Activated CD4-positive, alpha-beta memory T cell treated with anti-CD3 and anti-CD28 coated beads for 36 hours (primary cell): ENCODE measurements at regions of chr21 and their contacts with region 1.

Region 1: DNA sequence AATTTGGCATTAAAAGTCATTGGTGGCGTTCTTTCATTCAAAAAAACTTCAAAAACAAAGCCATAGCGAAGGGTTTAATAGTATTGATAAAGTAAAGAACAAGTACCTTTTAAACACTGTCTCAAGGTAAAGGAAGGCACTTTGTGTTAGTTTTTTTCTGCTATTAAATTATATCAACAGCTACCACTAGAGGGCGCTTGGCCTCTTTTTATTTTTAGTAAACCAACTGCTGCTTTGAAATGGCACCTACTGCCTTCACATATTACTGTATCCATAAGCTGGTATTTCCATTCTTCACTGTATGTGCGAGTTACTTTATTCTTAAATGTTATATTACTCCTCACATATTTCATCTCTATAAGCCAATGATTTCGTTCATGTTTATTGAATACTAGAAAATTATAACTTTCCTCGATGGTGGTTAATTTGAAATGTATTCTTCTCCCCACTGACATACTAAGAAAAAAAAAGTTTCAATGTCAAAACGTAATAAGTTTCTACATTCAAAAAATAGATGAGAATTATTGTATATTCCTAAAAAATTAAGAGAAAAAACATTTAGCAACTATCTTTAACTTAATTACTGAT is 125.7 kb upstream of the CXADR start:
- DNase-seq: peak; percentile 29
- H3K4me3 Mint-ChIP-seq: no peak overlapping the region
- H3K27ac Mint-ChIP-seq: no peak overlapping the region
- H3K4me1 Mint-ChIP-seq: no peaks in the 10 kb centered on the region
- H3K27me3 Mint-ChIP-seq: peaks cover 5% of the 10 kb centered on the region

Region 2: DNA sequence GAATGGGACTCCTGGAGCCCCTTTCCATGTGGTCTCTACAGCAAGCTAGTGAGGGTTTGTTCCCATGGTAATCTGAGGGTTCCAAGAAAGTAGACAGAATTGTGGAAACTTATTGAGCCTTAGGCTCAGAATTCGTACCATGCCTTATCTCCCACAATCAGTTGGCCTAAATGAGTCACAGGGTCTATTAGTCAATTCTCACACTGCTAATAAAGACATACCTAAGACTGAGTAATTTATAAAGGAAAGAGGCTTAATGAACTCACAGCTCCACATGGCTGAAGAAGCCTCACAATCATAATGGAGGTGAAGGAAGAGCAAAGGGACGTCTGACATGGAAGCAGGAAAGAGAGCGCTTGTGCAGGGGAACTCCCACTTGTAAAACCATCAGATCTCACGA is 19.1 kb after region 1 on chr21:
- CTCF ChIA-PET with region 1: interaction called, 12 read pairs
- POLR2A ChIA-PET with region 1: no interaction called
- intact Hi-C with region 1: no loop called
- DNase-seq: no peak
- H3K4me3 Mint-ChIP-seq: no peak overlapping the region
- H3K27ac Mint-ChIP-seq: no peak overlapping the region
- H3K4me1 Mint-ChIP-seq: no peaks in the 10 kb centered on the region
- H3K27me3 Mint-ChIP-seq: no peaks in the 10 kb centered on the region

Region 3: GRCh38 chr21:17554679-17555465 is 167.7 kb after region 1 on chr21:
- CTCF ChIA-PET with region 1: interaction called, 23 read pairs
- POLR2A ChIA-PET with region 1: no interaction called
- intact Hi-C with region 1: loop called (anchors 1 kb)
- DNase-seq: no peak
- H3K4me3 Mint-ChIP-seq: no peak overlapping the region
- H3K27ac Mint-ChIP-seq: no peak overlapping the region
- H3K4me1 Mint-ChIP-seq: no peaks in the 10 kb centered on the region
- H3K27me3 Mint-ChIP-seq: no peaks in the 10 kb centered on the region

Region 4: DNA sequence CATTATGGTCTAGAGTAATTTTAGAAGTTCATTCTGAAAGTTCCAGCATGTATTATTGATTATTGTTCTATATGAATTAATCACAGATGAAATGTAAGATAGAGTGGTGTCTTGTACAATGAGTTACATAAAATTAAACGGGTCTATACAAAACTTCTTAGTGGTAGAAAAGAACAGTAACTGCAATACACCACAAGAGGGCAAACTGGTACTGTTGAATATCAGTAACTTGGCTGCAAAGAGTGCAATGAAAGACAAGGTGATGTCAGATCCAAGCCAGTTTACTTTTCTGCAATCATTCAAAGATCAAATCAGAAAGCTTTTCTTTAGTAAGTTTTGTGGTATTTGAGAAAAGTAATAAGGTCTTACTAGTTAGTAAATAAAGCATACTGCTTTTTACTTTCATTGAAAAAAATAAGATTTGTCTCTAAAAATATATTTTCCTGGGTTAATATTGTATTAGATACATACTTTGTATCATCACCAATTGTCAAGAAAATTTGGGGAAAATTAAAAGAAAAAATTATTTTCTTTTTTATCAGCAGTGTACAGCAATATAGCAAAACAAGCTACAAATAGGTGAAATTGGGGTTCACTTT is 292.0 kb after region 1 on chr21:
- CTCF ChIA-PET with region 1: interaction called, 3 read pairs
- POLR2A ChIA-PET with region 1: no interaction called
- intact Hi-C with region 1: loop called (anchors 1 kb)
- DNase-seq: no peak
- H3K4me3 Mint-ChIP-seq: no peak overlapping the region
- H3K27ac Mint-ChIP-seq: no peak overlapping the region
- H3K4me1 Mint-ChIP-seq: no peaks in the 10 kb centered on the region
- H3K27me3 Mint-ChIP-seq: no peaks in the 10 kb centered on the region

Region 5: GRCh38 chr21:17925000-17925610 is 538.0 kb after region 1 on chr21:
- CTCF ChIA-PET with region 1: no interaction called
- POLR2A ChIA-PET with region 1: no interaction called
- intact Hi-C with region 1: loop called (anchors 1 kb)
- DNase-seq: peak; percentile 54
- H3K4me3 Mint-ChIP-seq: no peak overlapping the region
- H3K27ac Mint-ChIP-seq: no peak overlapping the region
- H3K4me1 Mint-ChIP-seq: no peaks in the 10 kb centered on the region
- H3K27me3 Mint-ChIP-seq: no peaks in the 10 kb centered on the region

Region 6: GRCh38 chr21:18218331-18218730 is 831.2 kb after region 1 on chr21:
- CTCF ChIA-PET with region 1: no interaction called
- POLR2A ChIA-PET with region 1: no interaction called
- intact Hi-C with region 1: no loop called
- DNase-seq: no peak
- H3K4me3 Mint-ChIP-seq: no peak overlapping the region
- H3K27ac Mint-ChIP-seq: no peak overlapping the region
- H3K4me1 Mint-ChIP-seq: no peaks in the 10 kb centered on the region
- H3K27me3 Mint-ChIP-seq: no peaks in the 10 kb centered on the region